ENCODE measurements at regions of chr10 and their contacts with region 1.

Region 1: GRCh38 chr10:59606551-59606961 is 103.1 kb downstream of the SLC16A9 start:
- DNase-seq: no peak

Region 2: DNA sequence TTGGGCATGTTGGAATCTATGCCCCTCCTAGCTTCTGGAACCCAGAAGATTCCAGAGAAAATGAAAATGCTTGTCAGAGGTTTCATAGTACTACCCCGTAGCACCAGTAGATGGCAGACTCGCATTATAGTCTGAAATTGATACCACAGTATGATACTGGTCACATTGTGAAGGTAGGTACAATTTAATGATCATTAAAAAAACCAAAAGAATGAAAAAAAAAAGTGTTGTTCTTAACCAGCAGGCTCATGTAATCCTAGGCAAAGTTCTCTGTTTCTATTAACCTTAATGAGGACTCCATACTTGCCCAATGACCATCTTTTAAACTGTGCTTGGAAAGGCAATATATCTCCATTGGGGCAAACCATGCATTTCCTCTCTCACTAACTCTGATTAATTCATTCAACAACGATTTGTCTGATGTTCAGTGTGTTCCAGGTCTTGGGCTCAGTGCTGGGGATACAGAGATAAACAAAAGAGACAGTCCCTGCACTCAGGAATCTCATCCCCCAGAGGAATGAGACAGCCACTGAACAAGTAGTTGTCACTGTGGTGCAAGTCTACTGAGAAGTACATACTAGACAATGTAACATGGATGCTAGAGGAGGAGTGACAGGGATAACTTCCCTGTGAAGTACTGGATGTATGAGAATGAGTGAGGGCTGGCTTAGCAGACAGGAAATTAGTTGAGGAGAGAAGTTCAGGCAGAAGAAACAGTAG is 653.6 kb before region 1 on chr10:
- in situ Hi-C with region 1: loop called (anchors 25 kb)
- DNase-seq: peak; percentile 40

Measured in KBM-7 (cell line).